Motor neuron (in vitro differentiated cells): ENCODE measurements at regions of chr12 and their contacts with region 1.

Region 1: DNA sequence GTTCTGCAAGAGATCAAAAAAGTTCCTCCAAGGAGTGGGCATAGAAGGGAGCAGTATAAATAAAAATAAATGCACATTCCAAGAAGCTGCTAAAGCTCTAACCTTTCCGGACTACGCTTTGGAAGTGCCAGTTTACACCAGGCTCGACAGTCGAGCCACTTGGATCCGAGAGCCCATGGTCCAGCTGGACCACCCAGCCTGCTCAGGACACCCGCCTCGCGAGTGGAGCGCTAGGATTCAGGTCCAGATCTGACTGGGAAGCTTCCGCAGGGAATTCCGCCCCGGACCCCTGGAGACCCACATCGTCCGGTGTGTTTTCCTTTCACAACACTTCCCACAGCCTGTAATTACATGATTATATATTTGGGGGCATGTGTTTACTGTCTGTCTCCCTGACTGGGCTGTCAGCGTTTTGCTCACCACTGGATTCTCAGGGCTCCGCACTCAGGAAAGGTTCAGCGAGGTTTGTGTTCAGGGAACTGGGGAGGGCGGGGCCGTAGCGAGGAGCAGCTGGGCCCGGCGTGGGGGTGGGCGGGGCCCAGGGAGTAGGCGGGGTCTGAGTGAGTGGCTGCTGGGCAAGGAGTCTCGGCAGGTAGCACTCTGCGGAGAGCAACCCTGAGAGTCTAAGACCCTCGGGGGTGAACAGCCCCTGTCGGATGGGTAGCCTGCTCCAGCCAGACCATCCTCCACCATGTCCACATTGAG is 52.3 kb upstream of the TMEM263 start:
- ATAC-seq: peak; percentile 87 to 99 (median 97)
- H3K4me3 ChIP-seq: peak overlapping the region; percentile 25 to 38 (median 27)
- H3K27ac ChIP-seq: no peak overlapping the region
- H3K4me1 ChIP-seq: peaks cover 14 to 16% of the 10 kb centered on the region in 2 donors

Region 2: GRCh38 chr12:106247674-106248311 is 655.6 kb before region 1 on chr12 and contains the start of gene CKAP4:
- in situ Hi-C with region 1: loop called in 1 of 9 experiments (anchors 25 kb)
- ATAC-seq: peak; percentile 20 to 87 (median 82)
- H3K4me3 ChIP-seq: peak within 1 kb of the TSS; percentile 56 to 98 (median 80)
- H3K27ac ChIP-seq: peak within 1 kb of the TSS; percentile 95 to 96
- H3K4me1 ChIP-seq: peaks cover 24 to 25% of the 10 kb centered on the region in 2 donors
- total RNA-seq, gene CKAP4: 38.0 to 132 (median 50.4) TPM

Region 3: GRCh38 chr12:106357549-106358395 is 545.6 kb before region 1 on chr12 and contains the start of gene POLR3B:
- in situ Hi-C with region 1: loop called in 2 of 9 experiments (anchors 25 kb)
- ATAC-seq: peak; percentile 89 to 92 (median 92)
- H3K4me3 ChIP-seq: peak within 1 kb of the TSS; percentile 62 to 95 (median 76)
- H3K27ac ChIP-seq: peak within 1 kb of the TSS; percentile 95
- H3K4me1 ChIP-seq: peaks cover 3 to 4% of the 10 kb centered on the region in 2 donors
- total RNA-seq, gene POLR3B: 6.8 to 19.4 (median 13.2) TPM

Region 4: GRCh38 chr12:106663385-106663784 is 240.0 kb before region 1 on chr12:
- in situ Hi-C with region 1: no loop called
- ATAC-seq: no peak
- H3K4me3 ChIP-seq: no peak overlapping the region
- H3K27ac ChIP-seq: no peak overlapping the region
- H3K4me1 ChIP-seq: no peaks in the 10 kb centered on the region